ENCODE measurements at regions of chr10 and their contacts with region 1.

Region 1: GRCh38 chr10:132223156-132223590 is 36.4 kb downstream of the DPYSL4 start:
- DNase-seq: peak; percentile 75 to 93
- H3K4me3 ChIP-seq: no peak overlapping the region
- H3K27ac ChIP-seq: no peak overlapping the region
- H3K4me1 ChIP-seq: peaks cover 0 to 8% (median 8%) of the 10 kb centered on the region in 4 donors
- H3K27me3 ChIP-seq: no peaks in the 10 kb centered on the region
- CTCF ChIP-seq: peak in 5 of 7 experiments; percentile 78 to 93 (median 80)
- EP300 ChIP-seq: no peak
- POLR2A ChIP-seq: no peak

Region 2: DNA sequence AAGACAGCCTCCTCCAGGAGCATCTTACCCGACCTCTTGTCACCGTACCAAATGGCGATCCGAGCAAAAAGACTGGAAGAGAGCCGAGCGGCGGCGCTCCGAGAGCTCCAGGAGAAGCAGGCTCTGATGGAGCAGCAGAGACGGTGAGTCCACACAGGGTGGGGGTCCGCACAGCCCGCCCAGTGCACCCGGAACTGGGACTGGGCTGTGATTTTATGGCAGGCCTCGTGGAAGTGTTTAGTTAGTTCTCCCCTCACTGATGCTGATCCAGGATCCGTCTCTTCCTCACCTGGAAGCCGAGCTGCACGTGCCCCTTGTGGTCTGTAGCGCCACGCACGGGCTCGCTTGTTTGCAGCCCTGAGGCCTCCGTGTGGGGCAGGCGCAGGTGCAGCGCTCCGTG is 128.4 kb after region 1 on chr10:
- intact Hi-C with region 1: loop called (anchors 2 kb)
- DNase-seq: no peak
- H3K4me3 ChIP-seq: no peak overlapping the region
- H3K27ac ChIP-seq: no peak overlapping the region
- H3K4me1 ChIP-seq: peaks cover 0 to 5% (median 2%) of the 10 kb centered on the region in 4 donors
- H3K27me3 ChIP-seq: no peaks in the 10 kb centered on the region
- CTCF ChIP-seq: no peak
- EP300 ChIP-seq: no peak
- POLR2A ChIP-seq: no peak

Region 3: DNA sequence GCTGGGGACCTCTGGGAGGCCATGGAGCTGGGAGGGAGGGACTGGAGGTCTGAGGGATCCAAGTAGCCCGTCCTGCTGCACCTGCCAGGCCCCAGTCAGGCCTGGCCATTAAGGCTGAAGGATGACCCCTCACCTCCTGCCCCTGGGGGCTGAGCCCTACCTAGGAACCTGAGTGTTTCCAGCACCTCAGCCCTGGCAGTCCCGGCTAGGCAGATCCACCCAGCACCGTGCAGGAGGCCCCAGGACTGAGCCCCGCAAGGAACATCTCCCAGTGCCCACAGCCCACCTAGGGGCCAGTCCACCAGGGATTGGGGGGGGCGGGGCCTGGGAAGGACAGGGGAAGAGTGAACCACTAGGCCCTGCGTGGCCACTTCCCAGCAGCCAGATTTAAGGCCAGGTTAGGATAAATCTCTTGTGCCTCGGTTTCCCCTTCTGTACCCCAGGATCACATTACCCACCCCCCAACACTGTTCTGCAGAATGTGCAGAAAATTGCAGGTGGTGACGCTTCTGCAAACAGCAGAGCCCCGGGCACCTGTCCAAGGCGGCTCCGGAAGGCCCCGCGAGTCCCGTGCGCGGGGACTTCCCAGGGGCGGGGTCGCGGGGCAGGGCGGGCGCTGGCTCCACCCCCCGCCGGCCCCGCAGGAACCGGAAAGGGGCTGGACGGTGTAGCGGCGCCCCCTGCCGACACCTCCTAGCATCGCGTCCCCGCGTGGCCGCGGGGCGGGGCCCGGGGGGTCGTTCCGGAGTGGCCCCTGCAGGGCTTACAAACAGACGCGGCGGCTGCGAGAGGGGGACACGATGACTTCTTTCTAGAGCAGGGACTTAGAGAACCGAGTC is 229.7 kb after region 1 on chr10:
- intact Hi-C with region 1: loop called (anchors 10 kb)
- DNase-seq: peak; percentile 95 to 96
- H3K4me3 ChIP-seq: peak overlapping the region; percentile 3 to 31 (median 22)
- H3K27ac ChIP-seq: peak overlapping the region; percentile 62 to 72 (median 69)
- H3K4me1 ChIP-seq: peaks cover 25 to 69% (median 49%) of the 10 kb centered on the region in 4 donors
- H3K27me3 ChIP-seq: peaks cover 0 to 4% (median 0%) of the 10 kb centered on the region in 3 donors
- CTCF ChIP-seq: peak in 5 of 7 experiments; percentile 94 to 99 (median 95)
- EP300 ChIP-seq: no peak
- POLR2A ChIP-seq: no peak

Measured in stomach (tissue), 19 donors.